MCF 10A (cell line): ENCODE measurements at regions of chr2 and their contacts with region 1.

Region 1: GRCh38 chr2:219294356-219295351 is 14.5 kb downstream of the PTPRN start:
- DNase-seq: peak; percentile 79
- H3K4me3 Mint-ChIP-seq: peak overlapping the region; percentile 68
- H3K27ac Mint-ChIP-seq: peak overlapping the region; percentile 40
- H3K4me1 Mint-ChIP-seq: peaks cover 17% of the 10 kb centered on the region
- H3K27me3 Mint-ChIP-seq: peaks cover 2% of the 10 kb centered on the region
- CTCF ChIP-seq: peak; percentile 99

Region 2: DNA sequence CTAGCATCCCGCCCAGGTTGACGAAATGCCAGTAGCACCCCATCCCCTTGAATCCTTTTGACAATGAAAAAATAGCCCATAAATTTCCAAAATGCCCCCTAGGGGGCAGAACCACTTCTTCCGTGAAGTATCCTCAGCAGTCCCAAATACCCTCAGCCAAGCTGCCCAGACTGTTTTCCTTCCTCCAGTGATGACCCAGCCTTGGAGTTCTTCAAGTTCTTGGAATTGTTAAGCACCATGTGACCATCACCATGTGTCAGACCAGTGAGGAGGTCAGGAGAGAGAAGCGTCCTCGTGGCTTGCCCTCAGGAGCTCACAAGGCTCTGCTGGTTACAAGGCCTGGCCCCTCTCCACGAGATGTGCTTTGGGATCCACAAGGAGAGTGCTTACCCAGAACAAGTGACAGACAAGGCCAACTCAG is 123.4 kb before region 1 on chr2:
- CTCF ChIA-PET with region 1: interaction called, 69 read pairs
- POLR2A ChIA-PET with region 1: interaction called, 38 read pairs
- intact Hi-C with region 1: loop called (anchors 1 kb)
- DNase-seq: peak; percentile 57
- H3K4me3 Mint-ChIP-seq: no peak overlapping the region
- H3K27ac Mint-ChIP-seq: no peak overlapping the region
- H3K4me1 Mint-ChIP-seq: peaks cover 8% of the 10 kb centered on the region
- H3K27me3 Mint-ChIP-seq: no peaks in the 10 kb centered on the region
- CTCF ChIP-seq: peak; percentile 59

Region 3: GRCh38 chr2:219218732-219219701 is 75.6 kb before region 1 on chr2 and contains the start of gene ABCB6:
- CTCF ChIA-PET with region 1: interaction called, 24 read pairs
- POLR2A ChIA-PET with region 1: interaction called, 5 read pairs
- intact Hi-C with region 1: loop called (anchors 2 kb)
- DNase-seq: peak; percentile 91
- H3K4me3 Mint-ChIP-seq: peak within 1 kb of the TSS; percentile 82
- H3K27ac Mint-ChIP-seq: peak within 1 kb of the TSS; percentile 83
- H3K4me1 Mint-ChIP-seq: no peaks in the 10 kb centered on the region
- H3K27me3 Mint-ChIP-seq: no peaks in the 10 kb centered on the region
- CTCF ChIP-seq: no peak
- total RNA-seq, gene ABCB6: 13.8 and 18.8 TPM in 2 replicates

Region 4: DNA sequence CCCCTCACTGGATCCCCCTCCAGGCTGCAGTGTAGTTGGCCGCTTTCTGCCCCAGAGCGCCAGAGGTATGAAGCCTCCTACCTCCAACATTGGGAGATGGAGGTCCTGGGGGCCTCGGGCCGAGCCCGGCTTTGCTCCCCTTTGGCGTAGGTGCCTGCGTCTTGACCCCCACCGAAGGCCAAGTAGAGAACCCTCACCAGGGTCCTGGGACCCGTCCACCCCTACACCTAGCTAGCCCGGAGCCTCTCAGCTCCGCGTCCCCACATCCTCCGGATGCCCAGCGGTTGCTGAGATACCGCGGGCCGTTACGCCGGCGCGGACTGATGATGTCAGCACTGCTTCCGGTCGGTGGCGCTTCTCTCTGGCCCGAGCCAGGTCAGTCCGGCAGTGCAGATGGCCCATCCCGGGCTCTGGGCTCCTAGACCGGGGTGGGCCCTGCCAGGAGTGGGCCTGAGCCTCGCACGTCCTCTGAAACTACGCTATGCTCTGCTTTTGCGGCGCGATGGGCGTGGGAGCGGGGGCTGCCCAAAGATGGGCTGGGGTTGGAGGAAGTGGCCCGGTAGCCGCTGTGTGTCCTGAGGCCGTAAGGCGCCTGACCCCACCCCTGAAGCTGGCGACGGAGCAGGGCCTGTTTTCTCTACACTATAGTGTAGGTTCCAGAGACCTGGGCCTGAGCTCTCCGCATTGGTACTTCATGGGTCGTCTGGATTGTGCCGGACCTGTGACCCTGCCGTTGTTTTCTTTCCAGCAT is 49.3 kb before region 1 on chr2 and contains the starts of genes GLB1L and STK16:
- CTCF ChIA-PET with region 1: interaction called, 123 read pairs
- POLR2A ChIA-PET with region 1: interaction called, 16 read pairs
- intact Hi-C with region 1: loop called (anchors 5 kb)
- DNase-seq: peak; percentile 87
- H3K4me3 Mint-ChIP-seq: peak within 1 kb of the TSS; percentile 80
- H3K27ac Mint-ChIP-seq: peak within 1 kb of the TSS; percentile 85
- H3K4me1 Mint-ChIP-seq: peaks cover 21% of the 10 kb centered on the region
- H3K27me3 Mint-ChIP-seq: no peaks in the 10 kb centered on the region
- CTCF ChIP-seq: no peak
- total RNA-seq, gene GLB1L: 4.9 and 7.5 TPM in 2 replicates
- total RNA-seq, gene STK16: 33.4 and 42.7 TPM in 2 replicates

Region 5: DNA sequence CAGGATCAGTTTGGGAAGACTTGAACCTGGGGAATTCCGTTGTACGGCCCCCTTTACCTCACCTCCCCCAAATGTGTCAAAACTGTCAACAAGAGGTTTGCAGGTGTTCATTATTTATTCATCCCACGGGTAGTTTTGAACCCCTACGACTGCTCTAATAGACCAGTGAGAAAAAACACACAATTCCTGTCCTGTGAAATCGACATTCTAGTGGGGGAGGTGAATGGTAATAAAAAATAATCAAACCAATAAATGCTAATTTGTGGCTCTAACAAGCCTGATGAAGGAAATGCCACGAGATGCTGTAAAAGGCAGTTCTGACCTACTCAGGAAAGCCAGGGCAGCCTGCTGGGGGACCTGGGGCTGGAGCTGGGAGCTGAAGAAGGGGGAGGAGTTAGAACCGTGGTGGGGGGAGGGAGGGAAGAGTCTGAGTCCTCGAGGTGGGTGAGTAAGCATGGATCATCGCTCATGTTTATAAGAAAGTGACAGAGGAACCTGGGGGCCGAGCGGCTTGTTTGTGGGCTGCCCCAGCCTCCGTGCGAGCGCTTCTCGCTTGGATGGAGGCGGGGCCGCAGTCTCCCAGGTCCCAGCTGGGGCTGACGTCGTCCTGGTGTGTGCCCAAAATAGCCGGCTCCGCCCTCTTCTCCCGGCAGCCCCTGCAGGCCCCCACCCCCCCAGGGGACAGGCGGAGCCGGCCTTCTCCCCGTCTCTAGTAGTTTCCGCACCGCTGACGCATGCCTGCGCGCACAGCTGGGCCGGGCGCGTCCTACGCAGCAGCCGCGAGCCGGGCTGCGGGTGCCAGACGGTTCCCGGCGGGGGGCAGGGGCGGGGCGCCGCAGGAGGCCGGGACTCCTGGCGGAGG is 15.8 kb before region 1 on chr2 and contains the start of gene DNAJB2:
- CTCF ChIA-PET with region 1: interaction called, 445 read pairs
- POLR2A ChIA-PET with region 1: interaction called, 170 read pairs
- intact Hi-C with region 1: loop called (anchors 1 kb)
- DNase-seq: peak; percentile 97
- H3K4me3 Mint-ChIP-seq: peak within 1 kb of the TSS; percentile 86
- H3K27ac Mint-ChIP-seq: peak within 1 kb of the TSS; percentile 86
- H3K4me1 Mint-ChIP-seq: peaks cover 42% of the 10 kb centered on the region
- H3K27me3 Mint-ChIP-seq: no peaks in the 10 kb centered on the region
- CTCF ChIP-seq: no peak
- total RNA-seq, gene DNAJB2: 58.2 and 59.8 TPM in 2 replicates

Region 6: DNA sequence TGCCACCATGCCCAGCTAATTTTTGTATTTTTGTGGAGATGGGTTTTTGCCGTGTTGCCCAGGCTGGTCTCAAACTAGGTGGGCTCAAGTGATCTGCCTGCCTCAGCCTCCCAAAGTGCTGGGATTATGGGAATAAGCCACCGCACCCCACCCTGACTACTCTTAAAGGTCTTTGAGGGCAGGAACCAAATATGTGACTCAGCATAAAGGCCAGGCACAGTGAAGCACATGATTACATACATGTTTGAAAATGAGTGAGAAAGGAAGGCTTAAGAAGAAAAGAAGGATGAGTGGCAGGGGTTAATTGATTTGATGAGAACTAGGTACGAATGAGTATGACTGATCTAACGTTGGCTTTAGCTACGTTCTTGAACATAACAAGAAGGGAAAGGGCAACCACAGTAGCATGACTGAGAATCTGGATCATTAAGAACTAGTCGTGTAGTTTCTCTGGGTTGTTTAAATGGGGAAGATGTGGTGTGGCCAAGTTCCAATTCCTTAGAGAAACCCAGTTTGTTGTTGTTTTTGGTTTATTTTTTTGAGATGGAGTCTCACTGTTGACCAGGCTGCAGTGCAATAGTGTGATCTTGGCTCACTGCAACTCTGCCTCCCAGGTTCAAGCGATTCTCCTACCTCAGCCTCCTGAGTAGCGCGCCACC is 31.1 kb after region 1 on chr2:
- CTCF ChIA-PET with region 1: interaction called, 10 read pairs
- POLR2A ChIA-PET with region 1: no interaction called
- intact Hi-C with region 1: no loop called
- DNase-seq: no peak
- H3K4me3 Mint-ChIP-seq: no peak overlapping the region
- H3K27ac Mint-ChIP-seq: no peak overlapping the region
- H3K4me1 Mint-ChIP-seq: no peaks in the 10 kb centered on the region
- H3K27me3 Mint-ChIP-seq: peaks cover 72% of the 10 kb centered on the region
- CTCF ChIP-seq: no peak